Aorta (tissue), 5 donors: ENCODE measurements at regions of chr10 and their contacts with region 1.

Region 1: DNA sequence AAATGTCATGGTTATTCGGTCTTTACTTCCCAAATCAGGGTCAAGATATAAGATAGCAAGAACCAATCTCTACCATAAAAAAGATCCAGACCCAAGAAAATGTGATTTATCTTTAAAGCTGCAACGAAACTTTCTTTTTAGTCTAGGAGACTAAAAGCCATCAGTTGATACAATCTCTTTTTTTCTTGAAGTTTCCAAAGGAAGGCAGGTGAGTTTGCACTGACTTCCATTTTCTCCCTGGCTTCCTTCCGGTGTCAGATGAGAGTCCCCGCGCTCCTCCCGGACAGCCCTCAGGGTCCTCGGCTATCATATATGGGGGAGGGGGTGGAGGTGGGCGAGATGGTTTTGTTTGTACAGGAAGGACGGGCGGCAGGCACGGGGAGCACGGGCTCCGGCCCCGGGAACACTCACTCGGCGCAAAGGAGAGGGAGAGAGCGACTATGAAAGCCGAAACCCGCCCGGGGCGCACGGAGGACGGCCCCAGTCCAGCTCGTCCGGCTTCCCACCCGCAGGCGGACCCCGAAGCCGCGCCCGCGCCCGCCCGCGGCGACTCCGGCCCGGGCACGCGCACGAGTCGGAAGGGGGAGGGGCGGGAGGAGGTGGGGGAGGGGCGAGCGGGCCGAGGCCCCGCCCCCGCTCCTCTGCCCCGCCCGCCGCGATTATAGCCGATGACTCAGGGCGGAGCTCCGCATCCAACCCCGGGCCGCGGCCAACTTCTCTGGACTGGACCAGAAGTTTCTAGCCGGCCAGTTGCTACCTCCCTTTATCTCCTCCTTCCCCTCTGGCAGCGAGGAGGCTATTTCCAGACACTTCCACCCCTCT is at the start of gene BAG3:
- DNase-seq: peak; percentile 97 to 98
- ATAC-seq: peak; percentile 94
- H3K4me3 ChIP-seq: peak within 1 kb of the TSS; percentile 87 to 95
- H3K27ac ChIP-seq: peak within 1 kb of the TSS; percentile 97 to 99
- H3K4me1 ChIP-seq: peaks cover 0 to 1% of the 10 kb centered on the region in 2 donors
- H3K27me3 ChIP-seq: no peaks in the 10 kb centered on the region
- total RNA-seq, gene BAG3: 65.8 to 85.1 TPM

Region 2: DNA sequence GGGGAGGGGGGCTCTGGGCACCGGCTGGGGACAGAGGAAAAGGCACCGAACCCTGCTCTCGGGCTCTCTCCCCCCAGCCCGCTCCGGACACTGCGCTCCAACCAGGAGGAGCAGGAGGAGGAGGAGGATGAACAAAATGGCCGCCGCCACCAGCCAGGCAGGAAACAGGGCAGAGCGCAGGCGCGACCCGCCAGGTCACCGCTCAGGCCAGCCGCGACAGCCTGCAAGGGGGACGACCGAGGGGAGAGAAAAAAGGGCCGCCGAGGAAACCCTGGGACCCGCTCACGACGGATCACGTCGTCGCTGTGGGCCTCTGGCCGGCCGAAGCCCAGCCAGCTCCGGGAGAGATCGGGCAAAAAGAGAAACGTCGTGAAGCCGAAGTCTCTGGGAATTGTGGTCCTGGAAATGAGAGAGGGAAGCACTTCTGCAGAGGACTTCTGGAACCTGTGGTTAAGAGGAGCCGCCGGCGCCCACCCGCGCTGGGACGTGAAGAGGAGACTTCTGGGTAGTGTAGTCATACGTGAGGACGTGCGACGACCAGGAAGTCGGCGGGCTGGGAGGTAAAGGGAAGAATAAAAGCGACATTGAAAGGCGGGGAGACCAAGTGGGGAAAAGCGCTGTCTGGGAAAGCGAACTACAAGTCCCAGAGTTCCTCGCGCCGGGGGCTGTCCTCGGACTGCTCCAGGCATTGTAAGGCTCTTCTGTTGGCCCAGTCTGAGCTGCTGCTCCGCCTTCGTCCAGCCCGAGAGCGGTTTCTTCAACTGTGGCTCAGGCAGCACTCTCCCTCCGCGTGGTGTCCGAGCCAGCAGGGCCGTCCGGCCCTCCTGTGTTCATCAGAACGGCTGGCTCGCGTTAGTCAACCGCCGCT is 54.1 kb before region 1 on chr10 and contains the start of gene TIAL1:
- intact Hi-C with region 1: loop called (anchors 5 to 10 kb)
- DNase-seq: peak; percentile 99
- ATAC-seq: peak; percentile 98
- H3K4me3 ChIP-seq: peak within 1 kb of the TSS; percentile 72 to 92
- H3K27ac ChIP-seq: peak within 1 kb of the TSS; percentile 45 to 99
- H3K4me1 ChIP-seq: peaks cover 2 to 8% of the 10 kb centered on the region in 2 donors
- H3K27me3 ChIP-seq: no peaks in the 10 kb centered on the region
- total RNA-seq, gene TIAL1: 91.4 to 123 TPM

Region 3: GRCh38 chr10:119608316-119609155 is 42.4 kb before region 1 on chr10:
- intact Hi-C with region 1: loop called in 1 of 2 experiments (anchors 10 kb)
- DNase-seq: peak; percentile 53 to 82
- ATAC-seq: no peak
- H3K4me3 ChIP-seq: no peak overlapping the region
- H3K27ac ChIP-seq: no peak overlapping the region
- H3K4me1 ChIP-seq: no peaks in the 10 kb centered on the region
- H3K27me3 ChIP-seq: no peaks in the 10 kb centered on the region